ENCODE measurements at regions of chr10 and their contacts with region 1.

Region 1: GRCh38 chr10:93376372-93377293 is 105.5 kb downstream of the MYOF start:
- DNase-seq: peak; percentile 85

Region 2: GRCh38 chr10:93180482-93180931 is 196.1 kb before region 1 on chr10:
- CTCF ChIA-PET with region 1: no interaction called
- POLR2A ChIA-PET with region 1: no interaction called
- DNase-seq: no peak

Region 3: GRCh38 chr10:93390306-93391090 is 13.9 kb after region 1 on chr10:
- CTCF ChIA-PET with region 1: interaction called, 23 read pairs
- POLR2A ChIA-PET with region 1: interaction called, 3 read pairs
- DNase-seq: no peak

Region 4: GRCh38 chr10:93471110-93471651 is 94.5 kb after region 1 on chr10:
- CTCF ChIA-PET with region 1: interaction called, 14 read pairs
- POLR2A ChIA-PET with region 1: interaction called, 4 read pairs
- DNase-seq: no peak

Region 5: GRCh38 chr10:93482145-93482834 is 105.7 kb after region 1 on chr10 and contains the start of gene MYOF:
- CTCF ChIA-PET with region 1: interaction called, 127 read pairs
- POLR2A ChIA-PET with region 1: interaction called, 14 read pairs
- DNase-seq: peak; percentile 74

Region 6: GRCh38 chr10:93488956-93489528 is 112.4 kb after region 1 on chr10:
- CTCF ChIA-PET with region 1: interaction called, 14 read pairs
- POLR2A ChIA-PET with region 1: no interaction called
- DNase-seq: no peak

Region 7: DNA sequence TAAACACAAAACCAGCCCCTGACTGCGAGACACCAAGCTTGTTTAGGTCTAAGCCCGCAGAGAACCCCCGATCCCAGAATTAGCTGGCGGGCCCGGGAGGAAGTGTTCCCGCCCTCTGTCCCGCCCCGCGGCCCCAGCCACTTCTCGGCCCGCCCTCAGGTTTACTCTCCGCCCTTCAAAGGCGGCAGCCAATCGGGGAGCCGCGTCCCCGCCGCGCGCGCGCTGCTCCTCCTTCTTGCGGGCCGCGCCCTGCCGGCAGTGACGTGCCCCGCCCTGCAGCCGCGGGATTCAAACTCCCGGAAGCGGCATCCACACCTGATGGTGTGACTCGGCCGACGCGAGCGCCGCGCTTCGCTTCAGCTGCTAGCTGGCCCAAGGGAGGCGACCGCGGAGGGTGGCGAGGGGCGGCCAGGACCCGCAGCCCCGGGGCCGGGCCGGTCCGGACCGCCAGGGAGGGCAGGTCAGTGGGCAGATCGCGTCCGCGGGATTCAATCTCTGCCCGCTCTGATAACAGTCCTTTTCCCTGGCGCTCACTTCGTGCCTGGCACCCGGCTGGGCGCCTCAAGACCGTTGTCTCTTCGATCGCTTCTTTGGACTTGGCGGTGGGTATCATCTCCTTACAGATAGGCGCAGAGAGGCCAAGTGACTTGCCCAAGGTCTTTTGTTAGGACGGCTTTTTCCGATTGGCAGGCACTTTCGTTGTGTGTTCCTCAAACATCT is 119.8 kb after region 1 on chr10 and contains the start of gene CEP55:
- CTCF ChIA-PET with region 1: interaction called, 14 read pairs
- POLR2A ChIA-PET with region 1: interaction called, 19 read pairs
- DNase-seq: peak; percentile 98